ENCODE measurements at regions of chr14 and their contacts with region 1.

Region 1: DNA sequence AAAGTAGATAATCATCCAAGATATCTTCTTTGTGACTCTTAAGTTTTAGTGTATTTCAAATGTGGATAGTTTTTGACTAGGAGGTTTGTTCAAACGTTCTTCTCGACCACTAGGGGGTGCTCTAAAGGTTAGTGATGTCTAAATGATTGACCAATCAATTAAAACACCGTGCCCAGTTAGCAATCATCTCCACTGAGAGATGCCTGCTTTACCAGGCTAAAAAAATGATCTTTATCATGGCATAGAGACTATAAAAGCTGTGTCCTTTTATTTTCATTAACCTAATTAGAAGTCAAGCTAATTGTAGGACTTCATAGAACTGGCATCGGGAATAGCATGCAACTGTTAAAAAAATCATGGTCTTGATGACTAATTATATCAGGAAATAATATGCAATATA is 153.9 kb downstream of the PRKCH start:
- DNase-seq: no peak
- H3K4me3 Mint-ChIP-seq: peak overlapping the region; percentile 39
- H3K27ac Mint-ChIP-seq: peak overlapping the region; percentile 83
- H3K4me1 Mint-ChIP-seq: peaks cover 96% of the 10 kb centered on the region
- H3K27me3 Mint-ChIP-seq: no peaks in the 10 kb centered on the region

Region 2: GRCh38 chr14:61342486-61342885 is 132.8 kb before region 1 on chr14:
- intact Hi-C with region 1: loop called (anchors 1 kb)
- DNase-seq: peak; percentile 85
- H3K4me3 Mint-ChIP-seq: peak overlapping the region; percentile 82
- H3K27ac Mint-ChIP-seq: peak overlapping the region; percentile 97
- H3K4me1 Mint-ChIP-seq: peaks cover 92% of the 10 kb centered on the region
- H3K27me3 Mint-ChIP-seq: no peaks in the 10 kb centered on the region

Region 3: DNA sequence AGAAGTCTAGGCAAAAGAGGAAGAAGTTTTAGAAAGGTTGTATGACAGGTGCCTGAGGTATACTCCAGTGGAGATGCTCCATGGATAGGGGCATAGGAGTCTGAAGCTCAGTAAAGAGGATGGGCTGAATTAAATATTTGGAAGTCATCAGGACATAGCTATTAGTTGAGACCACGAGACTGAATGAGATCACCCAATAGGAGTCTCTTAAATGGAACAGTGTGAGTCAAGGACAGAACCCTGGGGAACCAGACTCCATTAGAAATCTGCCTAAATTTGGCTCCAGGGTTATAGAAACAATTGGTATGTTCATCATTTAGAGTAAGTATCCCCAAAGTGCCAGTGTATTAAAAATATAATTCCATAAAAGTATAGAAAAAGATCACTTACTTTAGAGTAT is 18.7 kb after region 1 on chr14:
- intact Hi-C with region 1: loop called (anchors 1 kb)
- DNase-seq: no peak
- H3K4me3 Mint-ChIP-seq: no peak overlapping the region
- H3K27ac Mint-ChIP-seq: no peak overlapping the region
- H3K4me1 Mint-ChIP-seq: peaks cover 25% of the 10 kb centered on the region
- H3K27me3 Mint-ChIP-seq: no peaks in the 10 kb centered on the region

Region 4: DNA sequence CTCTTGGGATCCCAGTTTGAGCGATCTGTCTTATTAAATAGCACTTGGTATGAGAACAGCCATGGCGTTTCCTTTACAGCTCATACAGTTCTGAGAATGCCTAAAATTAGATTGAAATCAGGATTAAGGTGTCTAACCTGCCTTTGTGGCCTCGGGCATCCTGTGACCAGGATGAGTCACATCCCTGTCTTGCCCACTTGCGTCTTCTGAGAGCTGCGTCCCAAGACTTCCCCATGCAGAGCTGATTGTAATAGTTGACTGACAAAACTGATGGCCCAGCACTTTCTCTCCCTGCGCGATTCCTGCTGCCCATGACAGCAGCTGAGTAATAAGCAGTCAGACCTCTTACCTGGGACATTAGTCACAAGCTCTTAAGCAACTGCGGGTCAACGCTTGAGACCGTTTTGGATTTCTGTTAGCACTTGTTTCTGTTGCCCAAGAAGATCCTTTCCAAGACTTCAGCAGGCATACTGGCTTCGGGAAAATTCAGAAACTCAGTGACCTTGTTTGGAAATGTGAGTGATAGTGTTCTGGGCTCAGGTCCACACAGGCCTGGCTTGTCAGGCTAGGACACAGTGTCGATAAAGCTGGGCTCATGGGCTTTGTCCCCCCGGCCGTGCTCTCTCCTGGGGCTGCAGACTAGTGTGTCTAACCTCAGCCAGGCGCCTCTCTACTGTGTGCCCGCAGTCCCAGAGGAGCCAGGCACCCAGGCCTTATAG is 50.1 kb after region 1 on chr14:
- intact Hi-C with region 1: loop called (anchors 1 kb)
- DNase-seq: peak; percentile 65
- H3K4me3 Mint-ChIP-seq: peak overlapping the region; percentile 64
- H3K27ac Mint-ChIP-seq: peak overlapping the region; percentile 89
- H3K4me1 Mint-ChIP-seq: peaks cover 82% of the 10 kb centered on the region
- H3K27me3 Mint-ChIP-seq: no peaks in the 10 kb centered on the region

Region 5: DNA sequence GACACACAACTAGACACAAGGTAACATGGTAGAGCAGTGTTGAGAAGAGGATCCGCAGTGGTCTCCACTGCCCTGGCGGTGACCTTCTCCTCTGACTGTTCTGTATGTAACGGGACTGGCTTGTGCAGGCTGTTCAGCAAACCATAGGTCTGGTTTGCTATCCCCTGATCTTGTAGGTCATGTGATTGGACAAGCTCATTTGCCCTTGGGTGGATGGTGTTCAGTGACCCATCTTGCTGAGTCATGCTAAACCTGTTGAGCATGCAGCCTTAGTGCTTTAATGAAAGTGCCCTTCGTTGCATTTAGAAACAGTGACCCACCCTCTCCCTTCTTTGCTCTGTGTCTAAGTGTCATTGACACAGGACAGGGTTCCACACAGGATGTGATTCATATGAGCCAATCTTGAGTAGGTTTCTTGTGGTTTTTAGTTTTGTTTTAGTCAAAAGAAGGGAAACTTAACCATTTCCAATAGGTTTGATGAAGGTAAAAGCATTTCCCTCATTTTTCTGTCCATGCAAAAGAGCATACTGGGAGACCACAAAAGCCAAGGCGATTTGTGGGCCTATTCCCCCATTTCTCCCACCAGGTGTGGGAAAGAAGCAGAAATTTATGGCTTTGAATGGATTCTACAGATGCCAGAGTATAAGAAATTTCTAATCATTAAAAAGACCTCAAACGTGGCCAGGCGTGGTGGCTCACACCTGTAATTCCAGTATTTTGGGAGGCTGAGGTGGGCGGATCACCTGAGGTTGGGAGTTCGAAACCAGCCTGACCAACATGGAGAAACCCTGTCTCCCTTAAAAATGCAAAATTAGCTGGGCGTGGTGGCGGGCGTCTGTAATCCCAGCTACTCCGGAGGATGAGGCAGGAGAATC is 187.4 kb after region 1 on chr14:
- intact Hi-C with region 1: loop called (anchors 1 kb)
- DNase-seq: peak; percentile 64
- H3K4me3 Mint-ChIP-seq: peak overlapping the region; percentile 76
- H3K27ac Mint-ChIP-seq: peak overlapping the region; percentile 99
- H3K4me1 Mint-ChIP-seq: peaks cover 70% of the 10 kb centered on the region
- H3K27me3 Mint-ChIP-seq: no peaks in the 10 kb centered on the region

Region 6: DNA sequence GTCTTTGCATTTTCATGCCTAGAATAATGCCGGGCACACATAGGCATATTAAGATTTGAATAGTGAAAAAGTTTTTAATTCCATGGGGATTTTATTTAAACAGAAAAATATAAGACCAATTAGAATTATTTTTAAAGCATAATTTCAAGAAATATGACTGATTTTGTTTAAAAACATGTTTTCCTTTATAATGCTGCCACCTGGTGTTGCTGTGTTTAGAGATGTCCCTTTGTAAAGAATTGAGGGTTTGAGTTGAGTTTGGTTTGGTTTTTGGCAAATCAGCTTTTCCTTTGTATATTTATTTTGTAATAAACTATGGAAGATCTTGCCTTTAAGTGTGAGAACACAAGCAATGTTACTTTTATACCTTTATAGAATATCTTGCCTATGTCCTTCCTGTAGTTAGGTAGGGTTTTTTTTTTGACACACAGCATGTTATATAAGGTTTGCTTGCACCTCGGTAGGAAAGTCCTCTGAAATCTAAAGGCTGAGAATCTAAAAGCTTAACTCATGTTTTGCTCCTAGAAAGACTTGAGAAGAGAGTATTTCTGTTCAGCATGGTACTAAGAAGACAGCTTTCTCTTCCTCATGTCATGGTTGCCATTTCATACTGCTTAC is 255.5 kb after region 1 on chr14:
- intact Hi-C with region 1: loop called (anchors 1 kb)
- DNase-seq: no peak
- H3K4me3 Mint-ChIP-seq: peak overlapping the region; percentile 8
- H3K27ac Mint-ChIP-seq: peak overlapping the region; percentile 61
- H3K4me1 Mint-ChIP-seq: peaks cover 82% of the 10 kb centered on the region
- H3K27me3 Mint-ChIP-seq: no peaks in the 10 kb centered on the region